ENCODE measurements at regions of chr10 and their contacts with region 1.

Region 1: DNA sequence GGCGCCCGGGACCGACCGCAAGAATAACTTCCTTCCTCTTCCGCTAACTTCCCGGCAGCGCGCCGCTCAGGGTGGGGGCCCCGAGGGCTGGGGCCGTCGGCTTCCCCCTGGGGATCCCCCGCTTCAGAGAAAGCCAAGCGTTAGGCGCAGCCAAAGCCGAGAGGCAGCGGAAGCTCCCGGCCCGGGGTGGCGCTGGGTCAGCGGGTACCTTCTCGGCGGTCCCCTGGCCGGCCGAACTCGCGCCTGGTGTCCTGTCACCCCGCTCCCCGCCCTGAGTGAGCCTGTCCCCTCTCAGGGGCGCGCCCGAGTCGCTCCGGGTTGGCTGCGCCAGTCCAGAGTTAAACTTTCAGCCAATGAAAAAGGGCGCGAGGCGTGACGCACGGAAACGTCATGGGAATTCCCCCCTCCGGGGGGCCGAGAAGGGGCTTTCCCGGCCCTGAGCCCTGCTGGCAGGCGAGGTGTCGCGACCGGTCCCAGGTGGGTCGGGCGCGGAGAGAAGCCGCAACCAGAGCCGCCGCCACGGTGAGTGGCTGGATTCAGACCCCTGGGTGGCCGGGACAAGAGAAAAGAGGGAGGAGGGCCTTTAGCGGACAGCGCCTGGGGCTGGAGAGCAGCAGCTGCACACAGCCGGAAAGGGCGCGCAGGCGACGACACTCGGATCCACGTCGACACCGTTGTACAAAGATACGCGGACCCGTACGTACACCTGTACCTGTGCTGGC is 1.3 kb upstream of the NFKB2 start:
- DNase-seq: peak; percentile 99 to 100 (median 99)
- H3K4me3 ChIP-seq: peak overlapping the region; percentile 97 to 98
- H3K4me3 Mint-ChIP-seq: peak overlapping the region; percentile 94 to 98 (median 96)
- H3K27ac ChIP-seq: peak overlapping the region; percentile 100
- H3K27ac Mint-ChIP-seq: peak overlapping the region; percentile 98 to 100 (median 100)
- H3K4me1 ChIP-seq: peaks cover 43% of the 10 kb centered on the region
- H3K4me1 Mint-ChIP-seq: peaks cover 18 to 62% (median 34%) of the 10 kb centered on the region in 4 donors
- H3K27me3 ChIP-seq: no peaks in the 10 kb centered on the region
- H3K27me3 Mint-ChIP-seq: no peaks in the 10 kb centered on the region

Region 2: GRCh38 chr10:102132563-102133372 is 261.5 kb before region 1 on chr10 and contains the start of gene PPRC1:
- CTCF ChIA-PET with region 1: interaction called, 4 read pairs
- POLR2A ChIA-PET with region 1: no interaction called
- intact Hi-C with region 1: loop called (anchors 2 kb)
- DNase-seq: peak; percentile 97 to 99 (median 97)
- H3K4me3 ChIP-seq: peak within 1 kb of the TSS; percentile 55 to 61
- H3K4me3 Mint-ChIP-seq: peak within 1 kb of the TSS; percentile 92 to 99 (median 96)
- H3K27ac ChIP-seq: peak within 1 kb of the TSS; percentile 88
- H3K27ac Mint-ChIP-seq: peak within 1 kb of the TSS; percentile 93 to 99 (median 96)
- H3K4me1 ChIP-seq: peaks cover 38% of the 10 kb centered on the region
- H3K4me1 Mint-ChIP-seq: peaks cover 27 to 50% (median 38%) of the 10 kb centered on the region in 4 donors
- H3K27me3 ChIP-seq: no peaks in the 10 kb centered on the region
- H3K27me3 Mint-ChIP-seq: no peaks in the 10 kb centered on the region
- total RNA-seq, gene PPRC1: 38.9 to 39.8 TPM

Region 3: DNA sequence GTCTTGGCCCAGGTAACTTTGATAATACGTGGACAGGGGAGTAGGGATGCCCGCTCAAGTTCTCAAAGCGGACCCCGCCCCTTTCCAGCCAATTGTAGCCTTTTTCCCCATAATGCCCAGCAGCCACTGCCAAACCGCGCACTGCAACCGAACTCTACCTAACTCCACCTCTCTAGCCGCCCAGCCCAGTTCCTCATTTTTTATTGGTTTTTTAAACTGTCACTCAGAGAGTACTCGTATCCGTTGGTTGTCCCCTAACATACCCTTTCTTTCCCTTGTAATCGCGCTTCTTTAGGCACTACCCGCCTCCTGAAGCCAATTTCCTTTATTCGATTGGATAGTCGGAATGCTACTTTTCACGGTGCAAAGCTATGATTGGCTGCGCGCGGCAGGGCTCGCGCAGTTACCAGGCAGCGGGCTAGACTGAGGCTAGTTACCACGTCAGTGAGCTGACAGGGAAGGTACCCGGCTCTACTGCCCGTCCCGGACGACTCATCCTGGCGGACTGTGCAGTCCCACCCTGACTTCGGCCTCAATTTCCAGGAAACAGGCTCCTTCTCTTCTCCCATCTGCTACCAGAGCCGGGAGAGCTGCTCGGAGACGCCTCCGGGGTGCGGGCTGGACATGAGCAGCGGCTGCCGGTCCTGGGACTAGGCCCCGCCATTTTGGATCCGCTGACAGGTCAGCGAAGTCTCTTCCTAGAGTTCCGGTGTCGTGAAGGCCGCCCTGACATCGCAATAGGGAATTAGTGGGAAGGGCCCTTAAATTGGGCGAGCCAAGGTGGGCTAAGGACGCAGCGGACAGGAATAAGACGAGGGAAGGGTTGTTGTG is 148.9 kb before region 1 on chr10 and contains the start of gene GBF1:
- CTCF ChIA-PET with region 1: interaction called, 4 read pairs
- POLR2A ChIA-PET with region 1: interaction called, 7 read pairs
- intact Hi-C with region 1: loop called (anchors 1 kb)
- DNase-seq: peak; percentile 95 to 98 (median 96)
- H3K4me3 ChIP-seq: peak within 1 kb of the TSS; percentile 51 to 94
- H3K4me3 Mint-ChIP-seq: peak within 1 kb of the TSS; percentile 84 to 99 (median 98)
- H3K27ac ChIP-seq: peak within 1 kb of the TSS; percentile 96
- H3K27ac Mint-ChIP-seq: peak within 1 kb of the TSS; percentile 89 to 98 (median 97)
- H3K4me1 ChIP-seq: peaks cover 64% of the 10 kb centered on the region
- H3K4me1 Mint-ChIP-seq: peaks cover 38 to 66% (median 50%) of the 10 kb centered on the region in 4 donors
- H3K27me3 ChIP-seq: peaks cover 6% of the 10 kb centered on the region
- H3K27me3 Mint-ChIP-seq: peaks cover 3 to 16% of the 10 kb centered on the region in 2 donors
- total RNA-seq, gene GBF1: 39.6 to 44.7 TPM

Region 4: GRCh38 chr10:102408728-102409603 is 14.7 kb after region 1 on chr10:
- CTCF ChIA-PET with region 1: interaction called, 28 read pairs
- POLR2A ChIA-PET with region 1: interaction called, 30 read pairs
- intact Hi-C with region 1: no loop called
- DNase-seq: peak; percentile 53 to 76 (median 64)
- H3K4me3 ChIP-seq: peak overlapping the region in 1 of 2 donors; percentile 43
- H3K4me3 Mint-ChIP-seq: peak overlapping the region; percentile 63 to 88 (median 80)
- H3K27ac ChIP-seq: peak overlapping the region; percentile 22
- H3K27ac Mint-ChIP-seq: peak overlapping the region in 3 of 7 donors; percentile 54 to 95 (median 72)
- H3K4me1 ChIP-seq: peaks cover 27% of the 10 kb centered on the region
- H3K4me1 Mint-ChIP-seq: peaks cover 14 to 65% (median 22%) of the 10 kb centered on the region in 4 donors
- H3K27me3 ChIP-seq: peaks cover 11% of the 10 kb centered on the region
- H3K27me3 Mint-ChIP-seq: peaks cover 16 to 33% of the 10 kb centered on the region in 2 donors

Region 5: GRCh38 chr10:102432162-102432950 is 38.1 kb after region 1 on chr10 and contains the start of gene CUEDC2:
- CTCF ChIA-PET with region 1: interaction called, 7 read pairs
- POLR2A ChIA-PET with region 1: interaction called, 18 read pairs
- intact Hi-C with region 1: loop called (anchors 1 kb)
- DNase-seq: peak; percentile 89 to 95 (median 93)
- H3K4me3 ChIP-seq: peak within 1 kb of the TSS; percentile 83 to 92
- H3K4me3 Mint-ChIP-seq: peak within 1 kb of the TSS; percentile 90 to 95 (median 94)
- H3K27ac ChIP-seq: peak within 1 kb of the TSS; percentile 79
- H3K27ac Mint-ChIP-seq: peak within 1 kb of the TSS; percentile 84 to 98 (median 97)
- H3K4me1 ChIP-seq: peaks cover 52% of the 10 kb centered on the region
- H3K4me1 Mint-ChIP-seq: peaks cover 24 to 57% (median 40%) of the 10 kb centered on the region in 4 donors
- H3K27me3 ChIP-seq: no peaks in the 10 kb centered on the region
- H3K27me3 Mint-ChIP-seq: no peaks in the 10 kb centered on the region
- total RNA-seq, gene CUEDC2: 27.2 to 30.8 TPM

Region 6: GRCh38 chr10:102461187-102462054 is 67.2 kb after region 1 on chr10:
- CTCF ChIA-PET with region 1: interaction called, 7 read pairs
- POLR2A ChIA-PET with region 1: interaction called, 31 read pairs
- intact Hi-C with region 1: loop called (anchors 1 kb)
- DNase-seq: peak; percentile 90 to 91 (median 91)
- H3K4me3 ChIP-seq: peak overlapping the region; percentile 52 to 85
- H3K4me3 Mint-ChIP-seq: peak overlapping the region; percentile 83 to 95 (median 90)
- H3K27ac ChIP-seq: peak overlapping the region; percentile 70
- H3K27ac Mint-ChIP-seq: peak overlapping the region; percentile 75 to 95 (median 87)
- H3K4me1 ChIP-seq: peaks cover 16% of the 10 kb centered on the region
- H3K4me1 Mint-ChIP-seq: peaks cover 16 to 38% (median 23%) of the 10 kb centered on the region in 4 donors
- H3K27me3 ChIP-seq: no peaks in the 10 kb centered on the region
- H3K27me3 Mint-ChIP-seq: no peaks in the 10 kb centered on the region

Region 7: DNA sequence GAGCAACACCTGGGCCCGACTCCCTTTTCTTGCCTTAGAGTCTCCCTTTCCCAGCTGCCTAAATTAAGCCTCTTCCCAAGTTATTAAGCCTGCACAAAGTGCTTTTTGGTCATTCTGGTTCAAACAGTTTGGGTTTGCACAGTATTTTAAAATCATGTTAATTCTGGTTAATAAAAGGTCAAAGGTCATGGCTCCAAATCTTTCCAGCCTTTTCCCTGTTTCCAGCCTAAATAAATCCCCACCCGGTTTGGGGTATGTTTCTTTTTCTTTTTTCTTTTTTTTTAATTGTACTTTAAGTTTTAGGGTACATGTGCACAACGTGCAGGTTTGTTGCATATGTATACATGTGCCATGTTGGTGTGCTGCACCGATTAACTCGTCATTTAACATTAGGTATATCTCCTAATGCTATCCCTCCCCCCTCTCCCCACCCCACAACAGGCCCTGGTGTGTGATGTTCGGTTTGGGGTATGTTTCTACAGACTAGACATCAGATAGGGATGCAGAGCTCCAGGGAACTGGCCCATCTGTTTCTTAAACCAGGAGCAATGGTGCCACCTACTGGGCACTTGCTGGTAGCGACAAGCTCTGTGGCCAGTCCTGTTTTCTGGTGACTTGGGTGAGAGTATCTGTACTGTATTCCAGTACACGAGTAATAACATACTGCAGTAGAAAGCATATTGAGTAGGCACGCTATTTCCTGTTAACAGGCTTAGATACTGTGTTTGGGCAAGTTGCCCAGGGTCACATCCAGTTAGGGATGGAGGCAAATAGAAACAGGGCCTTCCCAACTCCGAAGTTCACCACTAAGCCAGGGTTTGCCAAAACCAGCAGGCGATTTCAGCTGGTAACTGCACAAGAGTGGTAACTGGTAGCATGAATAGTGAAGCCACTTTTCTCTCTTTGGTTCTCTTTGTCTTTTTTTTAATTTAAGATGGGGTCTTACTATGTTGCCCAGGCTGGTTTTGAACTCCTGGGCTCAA is 189.5 kb after region 1 on chr10:
- CTCF ChIA-PET with region 1: interaction called, 19 read pairs
- POLR2A ChIA-PET with region 1: interaction called, 5 read pairs
- intact Hi-C with region 1: loop called (anchors 1 kb)
- DNase-seq: peak; percentile 74 to 83 (median 76)
- H3K4me3 ChIP-seq: no peak overlapping the region
- H3K4me3 Mint-ChIP-seq: no peak overlapping the region
- H3K27ac ChIP-seq: no peak overlapping the region
- H3K27ac Mint-ChIP-seq: peak overlapping the region in 5 of 7 donors; percentile 7 to 84 (median 60)
- H3K4me1 ChIP-seq: peaks cover 8% of the 10 kb centered on the region
- H3K4me1 Mint-ChIP-seq: peaks cover 13 to 20% (median 15%) of the 10 kb centered on the region in 4 donors
- H3K27me3 ChIP-seq: no peaks in the 10 kb centered on the region
- H3K27me3 Mint-ChIP-seq: no peaks in the 10 kb centered on the region

Region 8: DNA sequence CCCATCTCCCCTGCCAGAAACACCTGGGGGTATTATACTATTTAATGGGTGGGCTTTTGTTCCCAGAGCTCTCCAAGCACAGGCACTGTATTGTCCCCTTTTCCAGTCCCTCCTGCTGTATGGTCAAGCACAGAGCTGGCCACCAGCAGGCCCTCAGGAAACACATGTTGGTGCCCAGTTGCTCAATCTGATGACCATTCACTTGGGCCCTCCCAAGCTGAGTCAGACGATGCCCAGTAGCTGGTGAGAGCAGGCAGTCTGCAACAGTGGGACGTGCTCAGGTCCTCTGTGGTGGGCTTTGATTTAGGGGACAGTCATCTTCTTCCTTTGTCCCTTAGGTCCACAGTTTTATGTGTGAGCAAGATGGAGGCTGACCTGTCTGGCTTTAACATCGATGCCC is 332.0 kb after region 1 on chr10:
- CTCF ChIA-PET with region 1: no interaction called
- POLR2A ChIA-PET with region 1: no interaction called
- intact Hi-C with region 1: no loop called
- DNase-seq: no peak
- H3K4me3 ChIP-seq: no peak overlapping the region
- H3K4me3 Mint-ChIP-seq: no peak overlapping the region
- H3K27ac ChIP-seq: no peak overlapping the region
- H3K27ac Mint-ChIP-seq: no peak overlapping the region
- H3K4me1 ChIP-seq: no peaks in the 10 kb centered on the region
- H3K4me1 Mint-ChIP-seq: peaks cover 7 to 13% (median 10%) of the 10 kb centered on the region in 4 donors
- H3K27me3 ChIP-seq: no peaks in the 10 kb centered on the region
- H3K27me3 Mint-ChIP-seq: no peaks in the 10 kb centered on the region